Ascending aorta (tissue), 2 donors: ENCODE measurements at regions of chr1 and their contacts with region 1.

Region 1: GRCh38 chr1:186985889-186986491 is 157.2 kb downstream of the PLA2G4A start:
- DNase-seq: no peak
- H3K4me3 ChIP-seq: no peak overlapping the region
- H3K27ac ChIP-seq: no peak overlapping the region
- H3K4me1 ChIP-seq: no peaks in the 10 kb centered on the region
- H3K27me3 ChIP-seq: no peaks in the 10 kb centered on the region
- CTCF ChIP-seq: peak; percentile 23 to 67 (median 54)

Region 2: DNA sequence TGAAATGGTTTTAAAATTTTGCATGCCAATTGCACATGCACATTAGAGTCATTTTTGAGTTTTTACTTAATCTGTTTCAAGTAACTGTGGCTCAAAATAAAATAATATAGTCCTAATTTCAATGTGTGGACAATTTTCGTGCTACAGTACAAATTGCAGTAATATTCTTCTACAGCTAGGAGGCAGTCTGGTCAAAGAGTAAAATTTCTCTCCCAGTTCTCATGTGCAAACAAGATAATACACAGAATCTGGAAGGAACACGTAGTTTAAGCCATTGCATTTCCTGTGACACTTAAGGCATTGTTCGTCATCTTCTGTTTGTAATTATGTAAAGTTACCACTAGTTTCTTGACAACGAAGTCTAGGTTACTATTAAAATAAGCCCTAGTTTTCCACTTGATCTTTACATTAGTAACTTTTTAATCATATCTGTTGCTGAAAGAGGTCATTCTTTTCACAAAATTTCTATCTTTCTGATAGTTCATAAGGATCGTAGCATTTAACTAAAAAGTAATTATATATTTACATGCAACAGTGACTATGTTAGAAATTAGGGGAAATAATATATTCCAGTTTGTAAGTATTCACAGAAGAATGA is 581.4 kb before region 1 on chr1:
- intact Hi-C with region 1: loop called (anchors 5 kb)
- DNase-seq: no peak
- H3K4me3 ChIP-seq: no peak overlapping the region
- H3K27ac ChIP-seq: no peak overlapping the region
- H3K4me1 ChIP-seq: no peaks in the 10 kb centered on the region
- H3K27me3 ChIP-seq: no peaks in the 10 kb centered on the region
- CTCF ChIP-seq: peak; percentile 21 to 62 (median 50)

Region 3: GRCh38 chr1:186482661-186483255 is 503.2 kb before region 1 on chr1:
- intact Hi-C with region 1: loop called (anchors 5 kb)
- DNase-seq: peak in 1 of 2 donors; percentile 66
- H3K4me3 ChIP-seq: no peak overlapping the region
- H3K27ac ChIP-seq: no peak overlapping the region
- H3K4me1 ChIP-seq: no peaks in the 10 kb centered on the region
- H3K27me3 ChIP-seq: no peaks in the 10 kb centered on the region
- CTCF ChIP-seq: peak; percentile 55 to 89 (median 61)

Region 4: DNA sequence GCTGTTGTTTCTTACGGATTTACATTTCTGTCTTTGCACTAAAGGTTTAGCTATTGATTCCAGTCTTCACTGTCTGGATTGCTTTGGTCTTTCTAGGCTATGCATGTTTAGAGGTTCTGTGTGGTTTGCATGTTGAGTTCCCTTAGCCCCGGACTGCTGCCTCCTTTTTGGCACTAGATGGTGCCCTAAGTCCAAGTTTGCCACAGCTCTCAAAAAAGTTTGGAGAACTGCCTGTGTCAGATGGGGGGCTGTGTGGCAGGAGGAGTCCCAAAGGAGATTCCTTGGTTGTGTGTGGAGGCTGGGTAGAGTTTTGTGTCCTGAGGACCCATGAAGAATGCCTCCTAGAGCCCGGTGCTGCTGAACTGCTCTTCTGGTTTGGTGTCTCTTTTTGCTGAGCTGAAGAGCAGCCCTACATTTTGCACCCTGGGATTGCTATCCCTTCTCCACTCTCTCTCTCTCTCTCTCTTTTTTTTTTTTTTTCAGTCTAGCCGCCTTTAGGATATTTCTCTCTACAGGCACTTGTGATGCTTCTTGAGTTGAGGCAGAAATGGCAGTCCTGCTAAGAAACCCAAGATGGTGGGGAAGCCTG is 380.1 kb before region 1 on chr1:
- intact Hi-C with region 1: loop called (anchors 5 kb)
- DNase-seq: no peak
- H3K4me3 ChIP-seq: no peak overlapping the region
- H3K27ac ChIP-seq: no peak overlapping the region
- H3K4me1 ChIP-seq: no peaks in the 10 kb centered on the region
- H3K27me3 ChIP-seq: no peaks in the 10 kb centered on the region
- CTCF ChIP-seq: peak in 1 of 3 experiments; percentile 45